ENCODE measurements at regions of chrX and their contacts with region 1.

Region 1: GRCh38 chrX:12974796-12975669 is at the start of gene TMSB4X:
- DNase-seq: peak; percentile 85
- H3K4me3 Mint-ChIP-seq: peak within 1 kb of the TSS; percentile 96
- H3K27ac Mint-ChIP-seq: peak within 1 kb of the TSS; percentile 99
- H3K4me1 Mint-ChIP-seq: peaks cover 30% of the 10 kb centered on the region
- H3K27me3 Mint-ChIP-seq: no peaks in the 10 kb centered on the region
- total RNA-seq, gene TMSB4X: 9,113 to 9,418 TPM

Region 2: GRCh38 chrX:12245650-12246645 is 729.1 kb before region 1 on chrX:
- CTCF ChIA-PET with region 1: no interaction called
- POLR2A ChIA-PET with region 1: no interaction called
- DNase-seq: no peak
- H3K4me3 Mint-ChIP-seq: no peak overlapping the region
- H3K27ac Mint-ChIP-seq: no peak overlapping the region
- H3K4me1 Mint-ChIP-seq: no peaks in the 10 kb centered on the region
- H3K27me3 Mint-ChIP-seq: no peaks in the 10 kb centered on the region

Region 3: GRCh38 chrX:12580548-12580947 is 394.5 kb before region 1 on chrX:
- CTCF ChIA-PET with region 1: no interaction called
- POLR2A ChIA-PET with region 1: no interaction called
- DNase-seq: no peak
- H3K4me3 Mint-ChIP-seq: no peak overlapping the region
- H3K27ac Mint-ChIP-seq: no peak overlapping the region
- H3K4me1 Mint-ChIP-seq: no peaks in the 10 kb centered on the region
- H3K27me3 Mint-ChIP-seq: no peaks in the 10 kb centered on the region

Region 4: DNA sequence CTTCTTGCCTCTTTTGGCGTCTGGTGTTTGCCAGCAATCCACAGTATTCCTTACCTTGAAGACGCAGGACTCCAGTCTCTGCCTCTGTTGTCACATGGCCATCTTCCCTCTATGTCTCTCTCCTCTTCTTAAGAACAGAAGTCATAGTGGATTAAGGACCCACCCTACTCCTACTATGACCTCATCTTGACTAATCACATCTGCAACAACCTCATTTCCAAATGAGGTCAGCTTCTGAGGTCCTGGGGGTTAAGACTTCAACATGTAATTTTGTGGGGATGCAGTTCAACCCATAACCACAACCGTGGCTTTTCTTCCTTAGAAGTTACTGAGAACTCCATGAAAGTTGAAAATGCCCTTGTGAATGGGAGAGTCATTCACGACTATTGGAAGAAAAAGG is 45.3 kb before region 1 on chrX:
- CTCF ChIA-PET with region 1: no interaction called
- POLR2A ChIA-PET with region 1: no interaction called
- DNase-seq: no peak
- H3K4me3 Mint-ChIP-seq: no peak overlapping the region
- H3K27ac Mint-ChIP-seq: no peak overlapping the region
- H3K4me1 Mint-ChIP-seq: no peaks in the 10 kb centered on the region
- H3K27me3 Mint-ChIP-seq: peaks cover 3% of the 10 kb centered on the region

Region 5: DNA sequence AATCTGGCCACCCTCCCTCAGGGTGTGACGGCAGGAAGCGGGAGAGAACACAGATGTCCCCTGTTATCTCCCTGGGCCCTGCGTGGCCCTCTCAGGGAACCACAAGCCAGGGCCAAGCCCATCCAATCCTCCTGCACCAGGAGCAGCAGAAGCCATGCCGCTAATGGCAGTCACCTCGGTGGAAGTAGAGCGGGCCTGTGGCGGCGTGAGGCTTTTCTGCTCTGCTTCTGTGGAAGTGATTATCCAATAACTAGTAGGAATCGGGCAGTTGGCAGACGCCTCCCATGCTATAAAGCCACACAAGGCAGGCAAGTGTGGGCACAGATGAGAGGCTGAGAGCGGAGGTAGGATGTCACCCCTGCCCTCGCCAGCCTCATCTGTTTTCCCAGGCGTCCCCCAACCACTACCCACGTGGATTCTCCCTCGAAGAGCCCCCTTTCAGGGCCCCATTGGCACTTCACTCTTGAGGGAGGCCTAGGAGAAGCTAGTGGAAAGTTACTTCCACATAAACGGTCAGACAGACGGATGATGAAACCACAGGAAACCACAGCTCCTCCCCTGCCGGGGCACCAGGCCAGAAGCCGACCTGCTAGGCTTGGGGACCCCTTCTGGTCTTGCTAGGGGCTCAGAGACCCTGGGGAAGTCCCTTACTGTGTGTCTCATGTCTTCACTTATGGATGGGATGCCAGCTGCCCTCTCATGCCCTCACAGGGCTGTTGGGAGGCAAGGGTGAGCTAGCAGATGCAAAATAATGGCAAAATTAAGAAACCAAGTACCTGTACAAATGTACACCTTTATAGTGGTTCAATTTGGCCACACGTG is 18.9 kb before region 1 on chrX:
- CTCF ChIA-PET with region 1: interaction called, 37 read pairs
- POLR2A ChIA-PET with region 1: interaction called, 7 read pairs
- DNase-seq: peak; percentile 65
- H3K4me3 Mint-ChIP-seq: peak overlapping the region; percentile 74
- H3K27ac Mint-ChIP-seq: peak overlapping the region; percentile 96
- H3K4me1 Mint-ChIP-seq: peaks cover 75% of the 10 kb centered on the region
- H3K27me3 Mint-ChIP-seq: no peaks in the 10 kb centered on the region

Region 6: GRCh38 chrX:13000301-13000811 is 25.3 kb after region 1 on chrX:
- CTCF ChIA-PET with region 1: interaction called, 5 read pairs
- POLR2A ChIA-PET with region 1: interaction called, 12 read pairs
- DNase-seq: peak; percentile 59
- H3K4me3 Mint-ChIP-seq: peak overlapping the region; percentile 72
- H3K27ac Mint-ChIP-seq: peak overlapping the region; percentile 97
- H3K4me1 Mint-ChIP-seq: peaks cover 83% of the 10 kb centered on the region
- H3K27me3 Mint-ChIP-seq: no peaks in the 10 kb centered on the region

Region 7: DNA sequence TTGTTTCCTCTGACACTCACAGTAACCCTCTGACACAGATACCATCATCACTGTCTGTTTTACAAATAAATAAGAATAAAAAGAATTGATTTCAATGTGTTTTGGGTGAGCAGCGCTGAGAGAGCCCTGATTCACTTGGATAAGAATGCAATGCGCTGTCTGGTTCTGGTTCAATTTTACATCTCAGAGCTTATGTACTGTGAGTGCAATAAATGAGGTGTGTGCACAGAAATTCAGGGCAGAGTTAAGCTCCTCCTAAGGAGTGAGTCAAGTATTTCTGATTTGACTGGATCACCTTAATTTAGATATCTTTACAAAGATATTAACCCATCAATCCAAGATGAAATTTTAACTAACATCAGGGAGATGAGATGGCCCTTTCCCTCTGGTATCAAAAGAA is 58.2 kb after region 1 on chrX:
- CTCF ChIA-PET with region 1: no interaction called
- POLR2A ChIA-PET with region 1: no interaction called
- DNase-seq: no peak
- H3K4me3 Mint-ChIP-seq: no peak overlapping the region
- H3K27ac Mint-ChIP-seq: no peak overlapping the region
- H3K4me1 Mint-ChIP-seq: peaks cover 34% of the 10 kb centered on the region
- H3K27me3 Mint-ChIP-seq: no peaks in the 10 kb centered on the region

Region 8: GRCh38 chrX:13087322-13088155 is 112.5 kb after region 1 on chrX:
- CTCF ChIA-PET with region 1: interaction called, 26 read pairs
- POLR2A ChIA-PET with region 1: interaction called, 39 read pairs
- DNase-seq: peak; percentile 79
- H3K4me3 Mint-ChIP-seq: peak overlapping the region; percentile 78
- H3K27ac Mint-ChIP-seq: peak overlapping the region; percentile 98
- H3K4me1 Mint-ChIP-seq: peaks cover 84% of the 10 kb centered on the region
- H3K27me3 Mint-ChIP-seq: no peaks in the 10 kb centered on the region

Region 9: DNA sequence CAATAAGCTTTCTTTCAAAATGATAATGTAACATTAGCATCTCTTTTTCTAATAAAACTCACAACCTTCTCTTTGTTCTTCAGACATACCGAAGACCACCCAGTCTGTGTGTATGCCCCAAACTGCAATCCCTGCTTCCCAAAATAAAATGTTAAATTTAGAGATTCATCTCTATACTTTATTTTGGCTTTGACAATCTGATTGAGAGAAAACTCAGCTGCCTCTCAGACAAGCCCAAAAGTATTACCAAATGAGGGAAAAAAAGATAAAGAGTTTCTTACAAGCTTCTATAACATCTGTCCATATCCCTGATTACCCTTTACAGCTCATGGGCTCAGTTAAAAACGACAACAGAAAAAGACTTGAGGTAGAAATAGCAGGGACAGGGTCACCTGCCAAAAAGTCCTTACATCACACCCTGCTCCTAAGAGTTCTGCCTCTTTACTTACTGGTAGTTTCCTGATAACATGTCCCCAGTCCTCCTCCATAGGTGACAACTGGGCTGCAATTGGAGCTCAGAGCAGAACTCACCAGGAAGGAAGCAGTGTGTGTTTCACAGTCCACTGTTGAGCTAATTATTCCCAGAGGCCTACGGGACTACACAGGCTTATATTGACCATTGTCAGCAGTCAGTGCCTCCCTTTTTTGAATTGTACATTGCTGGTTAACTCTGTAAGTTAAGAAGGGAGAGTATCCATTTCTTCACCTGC is 140.3 kb after region 1 on chrX:
- CTCF ChIA-PET with region 1: no interaction called
- POLR2A ChIA-PET with region 1: interaction called, 12 read pairs
- DNase-seq: no peak
- H3K4me3 Mint-ChIP-seq: no peak overlapping the region
- H3K27ac Mint-ChIP-seq: no peak overlapping the region
- H3K4me1 Mint-ChIP-seq: peaks cover 2% of the 10 kb centered on the region
- H3K27me3 Mint-ChIP-seq: no peaks in the 10 kb centered on the region